ENCODE measurements at regions of chr16 and their contacts with region 1.

Region 1: GRCh38 chr16:2531767-2532493 is 722 bp upstream of the CEMP1 start:
- DNase-seq: peak; percentile 96 to 98
- ATAC-seq: peak; percentile 85 to 96 (median 86)
- H3K4me3 ChIP-seq: peak overlapping the region; percentile 78
- H3K4me3 Mint-ChIP-seq: peak overlapping the region; percentile 93
- H3K27ac ChIP-seq: peak overlapping the region; percentile 100
- H3K27ac Mint-ChIP-seq: peak overlapping the region; percentile 98 to 100
- H3K4me1 ChIP-seq: peaks cover 41% of the 10 kb centered on the region
- H3K4me1 Mint-ChIP-seq: peaks cover 18 to 32% of the 10 kb centered on the region in 2 donors
- H3K27me3 ChIP-seq: no peaks in the 10 kb centered on the region
- H3K27me3 Mint-ChIP-seq: no peaks in the 10 kb centered on the region
- CTCF ChIP-seq: no peak

Region 2: GRCh38 chr16:2458887-2459646 is 72.9 kb before region 1 on chr16:
- intact Hi-C with region 1: no loop called
- DNase-seq: peak in 1 of 2 donors; percentile 19
- ATAC-seq: no peak
- H3K4me3 ChIP-seq: peak overlapping the region; percentile 55
- H3K4me3 Mint-ChIP-seq: peak overlapping the region; percentile 90
- H3K27ac ChIP-seq: no peak overlapping the region
- H3K27ac Mint-ChIP-seq: peak overlapping the region; percentile 79 to 95
- H3K4me1 ChIP-seq: peaks cover 16% of the 10 kb centered on the region
- H3K4me1 Mint-ChIP-seq: peaks cover 7 to 9% of the 10 kb centered on the region in 2 donors
- H3K27me3 ChIP-seq: no peaks in the 10 kb centered on the region
- H3K27me3 Mint-ChIP-seq: no peaks in the 10 kb centered on the region
- CTCF ChIP-seq: no peak

Region 3: GRCh38 chr16:2513405-2514322 is 18.3 kb before region 1 on chr16 and contains the start of gene ATP6V0C:
- intact Hi-C with region 1: loop called (anchors 1 kb)
- DNase-seq: peak; percentile 94 to 97
- ATAC-seq: peak; percentile 80 to 92 (median 85)
- H3K4me3 ChIP-seq: peak within 1 kb of the TSS; percentile 73
- H3K4me3 Mint-ChIP-seq: peak within 1 kb of the TSS; percentile 92
- H3K27ac ChIP-seq: peak within 1 kb of the TSS; percentile 91
- H3K27ac Mint-ChIP-seq: peak within 1 kb of the TSS; percentile 89 to 91
- H3K4me1 ChIP-seq: peaks cover 74% of the 10 kb centered on the region
- H3K4me1 Mint-ChIP-seq: peaks cover 54 to 71% of the 10 kb centered on the region in 2 donors
- H3K27me3 ChIP-seq: no peaks in the 10 kb centered on the region
- H3K27me3 Mint-ChIP-seq: peaks cover 0 to 4% of the 10 kb centered on the region in 2 donors
- CTCF ChIP-seq: no peak
- total RNA-seq, gene ATP6V0C: 183 to 242 (median 217) TPM